A673 (cell line): ENCODE measurements at regions of chr6 and their contacts with region 1.

Region 1: DNA sequence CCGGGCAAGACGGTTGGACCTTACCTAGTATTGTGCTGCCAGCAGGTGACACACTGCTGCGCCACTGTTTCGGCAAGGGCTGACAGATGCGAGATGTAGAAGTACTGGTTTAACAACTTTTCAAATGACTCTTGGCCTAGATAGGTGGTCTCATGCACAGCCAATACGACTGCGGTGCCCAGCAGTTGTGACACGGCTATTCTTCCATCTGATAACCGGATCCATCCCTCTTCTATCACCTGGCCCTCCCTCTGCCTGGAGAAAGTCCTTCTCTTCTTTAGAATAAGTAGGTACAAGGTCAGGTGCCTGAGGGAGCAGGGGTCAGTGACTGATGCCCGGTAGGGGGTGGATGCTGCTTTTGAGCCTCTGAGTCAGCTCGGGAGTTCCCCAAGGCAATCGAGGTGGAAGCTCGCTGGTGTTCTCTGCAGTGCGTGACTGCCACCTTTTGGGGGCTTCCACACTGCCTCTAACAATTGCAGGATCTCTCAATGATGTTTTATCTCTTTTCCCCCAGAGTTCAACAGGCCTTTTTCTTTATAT is 166.8 kb upstream of the GRIK2 start:
- DNase-seq: peak; percentile 73
- H3K4me3 ChIP-seq: no peak overlapping the region
- H3K27ac ChIP-seq: no peak overlapping the region
- H3K4me1 ChIP-seq: no peaks in the 10 kb centered on the region
- H3K27me3 ChIP-seq: no peaks in the 10 kb centered on the region
- CTCF ChIP-seq: peak; percentile 67

Region 2: GRCh38 chr6:100105138-100105753 is 1121.5 kb before region 1 on chr6:
- CTCF ChIA-PET with region 1: no interaction called
- POLR2A ChIA-PET with region 1: no interaction called
- intact Hi-C with region 1: loop called (anchors 5 kb)
- DNase-seq: no peak
- H3K4me3 ChIP-seq: no peak overlapping the region
- H3K27ac ChIP-seq: no peak overlapping the region
- H3K4me1 ChIP-seq: peaks cover 17% of the 10 kb centered on the region
- H3K27me3 ChIP-seq: no peaks in the 10 kb centered on the region
- CTCF ChIP-seq: no peak

Region 3: GRCh38 chr6:100267721-100268123 is 959.0 kb before region 1 on chr6:
- CTCF ChIA-PET with region 1: no interaction called
- POLR2A ChIA-PET with region 1: no interaction called
- intact Hi-C with region 1: no loop called
- DNase-seq: no peak
- H3K4me3 ChIP-seq: no peak overlapping the region
- H3K27ac ChIP-seq: no peak overlapping the region
- H3K4me1 ChIP-seq: no peaks in the 10 kb centered on the region
- H3K27me3 ChIP-seq: no peaks in the 10 kb centered on the region
- CTCF ChIP-seq: no peak

Region 4: DNA sequence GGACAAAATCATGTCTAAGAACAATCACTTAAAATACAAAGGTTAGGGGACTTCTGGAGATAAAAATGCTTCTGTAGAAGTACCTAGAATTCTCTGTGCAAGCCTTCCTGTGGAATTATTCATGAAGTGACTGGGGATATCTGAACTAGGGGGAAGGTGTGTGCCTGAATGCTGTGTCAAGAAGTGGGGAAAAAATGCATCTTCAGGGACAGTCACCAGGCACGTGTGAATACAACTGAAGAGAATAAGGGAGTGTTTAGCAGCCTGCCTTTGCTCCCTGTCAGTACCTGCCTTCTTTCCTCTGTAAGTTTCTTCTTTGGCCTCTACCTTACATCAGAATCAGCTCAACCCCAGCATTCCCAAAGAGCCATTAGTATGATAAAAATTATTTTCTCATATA is 546.5 kb before region 1 on chr6:
- CTCF ChIA-PET with region 1: no interaction called
- POLR2A ChIA-PET with region 1: no interaction called
- intact Hi-C with region 1: loop called (anchors 5 kb)
- DNase-seq: no peak
- H3K4me3 ChIP-seq: no peak overlapping the region
- H3K27ac ChIP-seq: no peak overlapping the region
- H3K4me1 ChIP-seq: no peaks in the 10 kb centered on the region
- H3K27me3 ChIP-seq: no peaks in the 10 kb centered on the region
- CTCF ChIP-seq: no peak

Region 5: GRCh38 chr6:100719883-100720682 is 506.6 kb before region 1 on chr6:
- CTCF ChIA-PET with region 1: no interaction called
- POLR2A ChIA-PET with region 1: no interaction called
- intact Hi-C with region 1: loop called (anchors 5 kb)
- DNase-seq: peak; percentile 51
- H3K4me3 ChIP-seq: no peak overlapping the region
- H3K27ac ChIP-seq: no peak overlapping the region
- H3K4me1 ChIP-seq: peaks cover 13% of the 10 kb centered on the region
- H3K27me3 ChIP-seq: no peaks in the 10 kb centered on the region
- CTCF ChIP-seq: peak; percentile 65

Region 6: DNA sequence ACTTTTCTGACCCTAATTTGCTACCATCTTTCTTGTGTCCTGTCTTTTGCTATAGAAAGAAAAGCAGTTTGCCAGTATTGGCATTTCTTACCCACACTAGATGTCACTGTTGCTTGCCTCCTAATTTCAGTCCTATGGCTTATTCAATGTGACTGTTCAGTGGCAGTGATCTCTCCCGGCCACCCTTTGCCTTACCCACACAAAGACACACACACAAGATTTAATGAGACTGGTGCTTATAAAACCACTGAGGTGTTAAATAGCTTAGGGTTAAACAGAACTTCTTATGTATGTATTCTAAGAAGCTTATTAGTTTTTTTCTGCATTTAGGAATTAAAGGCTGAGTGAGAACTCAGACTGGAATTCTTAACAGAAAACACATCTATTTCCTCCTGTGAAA is 112.0 kb before region 1 on chr6:
- CTCF ChIA-PET with region 1: no interaction called
- POLR2A ChIA-PET with region 1: no interaction called
- intact Hi-C with region 1: loop called (anchors 5 kb)
- DNase-seq: peak; percentile 90
- H3K4me3 ChIP-seq: peak overlapping the region; percentile 9
- H3K27ac ChIP-seq: no peak overlapping the region
- H3K4me1 ChIP-seq: peaks cover 60% of the 10 kb centered on the region
- H3K27me3 ChIP-seq: no peaks in the 10 kb centered on the region
- CTCF ChIP-seq: peak; percentile 84

Region 7: GRCh38 chr6:101195588-101195987 is 31.1 kb before region 1 on chr6:
- CTCF ChIA-PET with region 1: no interaction called
- POLR2A ChIA-PET with region 1: no interaction called
- intact Hi-C with region 1: no loop called
- DNase-seq: peak; percentile 51
- H3K4me3 ChIP-seq: no peak overlapping the region
- H3K27ac ChIP-seq: peak overlapping the region; percentile 18
- H3K4me1 ChIP-seq: peaks cover 7% of the 10 kb centered on the region
- H3K27me3 ChIP-seq: no peaks in the 10 kb centered on the region
- CTCF ChIP-seq: no peak